HepG2 (cell line): ENCODE measurements at regions of chr4 and their contacts with region 1.

Region 1: GRCh38 chr4:41652971-41653370 is 95.6 kb downstream of the PHOX2B start:
- DNase-seq: no peak
- ATAC-seq: no peak
- H3K4me3 ChIP-seq: no peak overlapping the region
- H3K27ac ChIP-seq: no peak overlapping the region
- H3K4me1 ChIP-seq: no peaks in the 10 kb centered on the region
- H3K27me3 ChIP-seq: peaks cover 0 to 17% of the 10 kb centered on the region in 2 experiments; a peak in 3 of 5 replicates
- CTCF ChIP-seq: no peak
- EP300 ChIP-seq: no peak
- POLR2A ChIP-seq: no peak
- RAD21 ChIP-seq: no peak

Region 2: GRCh38 chr4:41287050-41287449 is 365.9 kb before region 1 on chr4:
- CTCF ChIA-PET with region 1: no interaction called
- POLR2A ChIA-PET with region 1: no interaction called
- in situ Hi-C with region 1: loop called (anchors 5 kb)
- intact Hi-C with region 1: no loop called
- DNase-seq: no peak
- ATAC-seq: no peak
- H3K4me3 ChIP-seq: no peak overlapping the region
- H3K27ac ChIP-seq: no peak overlapping the region
- H3K4me1 ChIP-seq: no peaks in the 10 kb centered on the region
- H3K27me3 ChIP-seq: peaks cover 0 to 9% of the 10 kb centered on the region in 2 experiments; a peak in 2 of 5 replicates
- CTCF ChIP-seq: no peak
- EP300 ChIP-seq: no peak
- POLR2A ChIP-seq: no peak
- RAD21 ChIP-seq: no peak

Region 3: GRCh38 chr4:41525129-41525528 is 127.8 kb before region 1 on chr4:
- CTCF ChIA-PET with region 1: no interaction called
- POLR2A ChIA-PET with region 1: no interaction called
- in situ Hi-C with region 1: no loop called
- intact Hi-C with region 1: no loop called
- DNase-seq: no peak
- ATAC-seq: no peak
- H3K4me3 ChIP-seq: no peak overlapping the region
- H3K27ac ChIP-seq: no peak overlapping the region
- H3K4me1 ChIP-seq: no peaks in the 10 kb centered on the region
- H3K27me3 ChIP-seq: peaks cover 0 to 4% of the 10 kb centered on the region in 2 experiments; a peak in 1 of 5 replicates
- CTCF ChIP-seq: no peak
- EP300 ChIP-seq: no peak
- POLR2A ChIP-seq: no peak
- RAD21 ChIP-seq: no peak